ENCODE measurements at regions of chr19 and their contacts with region 1.

Region 1: GRCh38 chr19:45817010-45817724 is 2.1 kb upstream of the RSPH6A start:
- DNase-seq: peak; percentile 95 to 100
- H3K4me3 ChIP-seq: peak overlapping the region; percentile 42 to 68 (median 52); a peak in 6 of 8 replicates
- H3K27ac ChIP-seq: peak overlapping the region; percentile 86
- H3K4me1 ChIP-seq: peaks cover 0 to 23% (median 20%) of the 10 kb centered on the region in 4 experiments; a peak in 6 of 7 replicates
- H3K27me3 ChIP-seq: no peaks in the 10 kb centered on the region
- CTCF ChIP-seq: peak; percentile 97 to 99 (median 99)
- EP300 ChIP-seq: peak in 1 of 2 experiments; percentile 40; a peak in 1 of 3 replicates
- POLR2A ChIP-seq: peak; percentile 68 to 71; a peak in 2 of 3 replicates
- RAD21 ChIP-seq: peak; percentile 60 to 67

Region 2: DNA sequence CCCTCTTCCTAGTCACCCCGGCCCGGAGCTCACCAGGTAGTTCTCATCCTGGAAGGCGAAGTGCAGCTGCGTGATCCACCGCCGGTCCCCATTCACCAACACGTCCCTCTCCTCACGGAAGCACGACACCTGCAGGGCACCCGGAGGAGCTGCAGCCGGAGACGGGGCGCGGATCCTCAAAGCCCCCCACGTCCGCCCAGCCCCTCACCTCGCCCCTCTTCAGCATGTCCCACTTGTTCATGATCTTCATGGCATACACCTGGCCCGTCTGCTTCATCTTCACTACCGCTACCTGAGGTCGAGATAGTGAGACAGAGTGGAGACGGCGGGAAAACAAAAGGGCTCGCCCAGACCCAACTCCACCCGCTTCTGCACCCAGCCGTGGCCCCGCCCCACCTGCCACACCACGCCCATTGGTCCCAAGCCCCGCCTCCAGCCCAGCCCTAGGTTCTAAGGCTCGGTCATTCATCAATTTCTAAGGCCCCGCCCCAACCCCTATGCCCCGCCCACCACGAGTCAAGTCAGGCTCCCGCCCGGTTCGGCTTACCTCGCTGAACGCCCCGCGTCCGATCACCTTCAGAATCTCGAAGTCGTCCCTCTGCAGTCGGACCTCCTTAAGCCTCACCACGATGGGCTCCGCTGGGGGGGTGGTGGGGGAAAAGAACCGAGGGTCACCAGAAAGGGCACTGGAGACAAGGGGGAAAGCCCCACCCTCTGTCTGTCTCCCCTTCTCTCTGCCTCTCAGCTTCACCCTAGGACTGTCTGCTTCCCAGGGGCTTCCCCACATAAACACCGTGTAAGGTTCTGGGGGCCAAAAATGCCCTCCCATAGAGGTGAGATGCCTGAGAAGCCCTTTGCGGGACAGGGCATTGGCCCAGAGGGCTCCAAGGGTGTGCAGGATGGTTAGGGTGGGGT is 37.7 kb before region 1 on chr19:
- CTCF ChIA-PET with region 1: interaction called, 15 read pairs
- POLR2A ChIA-PET with region 1: interaction called, 175 read pairs
- DNase-seq: peak; percentile 77 to 100
- H3K4me3 ChIP-seq: peak overlapping the region; percentile 19 to 60 (median 38); a peak in 7 of 8 replicates
- H3K27ac ChIP-seq: no peak overlapping the region
- H3K4me1 ChIP-seq: peaks cover 3 to 26% (median 15%) of the 10 kb centered on the region in 4 experiments
- H3K27me3 ChIP-seq: peaks cover 0 to 6% (median 0%) of the 10 kb centered on the region in 4 experiments; a peak in 1 of 7 replicates
- CTCF ChIP-seq: peak; percentile 81 to 87 (median 86)
- EP300 ChIP-seq: no peak
- POLR2A ChIP-seq: no peak
- RAD21 ChIP-seq: peak; percentile 45 to 52; a peak in 3 of 4 replicates

Region 3: DNA sequence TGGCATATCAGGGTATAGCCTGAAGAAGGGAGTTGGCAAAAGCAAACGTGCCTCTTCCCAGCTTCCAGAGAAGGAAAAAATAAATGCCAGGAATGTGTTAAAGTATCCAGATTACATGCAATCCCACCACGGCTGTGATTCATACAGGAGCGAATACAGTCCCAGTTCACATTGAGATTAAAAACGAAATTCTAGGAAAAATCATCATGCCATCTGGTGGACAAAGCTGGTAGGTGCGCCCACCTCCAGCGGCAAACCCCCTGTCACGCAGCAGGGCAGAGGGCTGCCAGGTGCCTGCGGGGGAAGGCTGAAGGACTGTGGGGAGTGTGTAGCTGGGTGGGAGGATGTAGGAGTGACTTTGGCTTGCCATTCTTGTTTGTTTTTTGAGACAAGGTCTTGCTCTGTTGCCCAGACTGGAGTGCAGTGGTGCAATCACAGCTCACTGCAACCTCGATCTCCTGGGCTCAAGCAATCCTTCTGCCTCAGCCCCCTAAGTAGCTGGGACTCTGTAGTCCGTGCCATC is 18.1 kb before region 1 on chr19:
- CTCF ChIA-PET with region 1: interaction called, 107 read pairs
- POLR2A ChIA-PET with region 1: interaction called, 106 read pairs
- DNase-seq: peak in 1 of 2 experiments; percentile 83
- H3K4me3 ChIP-seq: no peak overlapping the region
- H3K27ac ChIP-seq: no peak overlapping the region
- H3K4me1 ChIP-seq: peaks cover 0 to 4% (median 2%) of the 10 kb centered on the region in 4 experiments; a peak in 4 of 7 replicates
- H3K27me3 ChIP-seq: no peaks in the 10 kb centered on the region
- CTCF ChIP-seq: peak; percentile 66 to 84 (median 77)
- EP300 ChIP-seq: no peak
- POLR2A ChIP-seq: no peak
- RAD21 ChIP-seq: peak; percentile 45 to 52

Region 4: DNA sequence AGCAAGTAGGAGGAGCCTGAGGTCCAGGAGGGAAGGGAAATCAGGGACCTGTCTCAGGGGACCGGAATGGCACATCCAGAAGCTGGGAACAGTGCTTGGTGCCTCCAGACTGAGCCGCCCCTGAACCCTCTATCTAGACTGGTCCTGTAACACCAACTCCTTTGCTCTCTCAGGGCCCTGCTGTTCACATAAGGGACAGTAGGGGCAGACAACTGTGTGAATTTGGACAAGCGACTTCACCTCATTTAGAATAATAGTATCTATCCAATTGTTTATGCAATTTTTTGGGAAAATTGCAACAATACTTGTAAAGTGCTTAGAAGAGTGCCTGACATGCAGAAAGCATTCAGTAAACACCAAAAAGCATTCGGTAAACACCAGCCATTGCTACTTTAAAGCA is 31.8 kb after region 1 on chr19:
- CTCF ChIA-PET with region 1: interaction called, 13 read pairs
- POLR2A ChIA-PET with region 1: interaction called, 12 read pairs
- DNase-seq: no peak
- H3K4me3 ChIP-seq: no peak overlapping the region
- H3K27ac ChIP-seq: no peak overlapping the region
- H3K4me1 ChIP-seq: no peaks in the 10 kb centered on the region
- H3K27me3 ChIP-seq: no peaks in the 10 kb centered on the region; a peak in 1 of 7 replicates
- CTCF ChIP-seq: peak in 2 of 3 experiments; percentile 12 to 28; a peak in 2 of 4 replicates
- EP300 ChIP-seq: no peak
- POLR2A ChIP-seq: no peak
- RAD21 ChIP-seq: 0 out of 4 replicates have a peak, but pooled peaks of 1 of the 2 experiments have one; percentile 3

Region 5: DNA sequence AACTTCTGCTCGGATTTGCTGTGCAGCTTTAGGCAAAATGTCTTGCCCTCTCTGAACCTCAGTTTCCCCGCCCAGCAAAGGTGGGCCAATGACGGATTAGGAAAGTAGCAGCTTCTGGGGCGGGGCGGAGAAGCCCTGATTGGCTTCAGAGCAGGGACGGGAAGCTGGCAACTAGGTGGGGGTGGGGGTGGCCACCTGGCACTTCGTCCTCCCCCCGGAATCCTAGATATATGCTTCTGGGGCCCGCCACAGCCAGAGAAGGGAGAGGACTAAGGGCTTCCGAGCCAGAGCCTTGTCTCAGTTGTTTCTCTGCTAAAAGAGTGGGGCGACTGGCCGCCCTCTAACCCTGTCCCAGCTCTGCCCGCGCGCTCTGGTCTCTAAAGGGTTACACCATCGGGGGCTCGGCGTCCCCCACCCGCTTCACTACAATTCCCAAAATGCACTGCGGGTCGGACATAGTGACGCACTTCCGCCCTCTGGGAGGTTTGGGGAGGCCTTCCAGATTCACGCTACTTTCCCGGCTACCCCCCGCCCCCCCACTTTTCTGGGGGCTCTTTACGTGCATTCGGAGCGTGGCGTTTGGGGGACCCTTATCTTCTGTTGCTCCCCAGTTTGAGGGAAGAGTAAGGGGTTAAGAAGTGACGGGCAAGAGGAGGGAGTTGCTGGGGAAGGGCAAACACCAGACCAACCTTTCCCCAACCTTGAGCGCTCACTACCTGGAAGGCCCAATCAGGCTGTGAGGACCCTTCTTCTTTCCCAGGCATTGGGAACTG is 69.4 kb after region 1 on chr19:
- CTCF ChIA-PET with region 1: interaction called, 23 read pairs
- POLR2A ChIA-PET with region 1: interaction called, 9 read pairs
- DNase-seq: peak in 1 of 2 experiments; percentile 93
- H3K4me3 ChIP-seq: peak overlapping the region; percentile 71 to 80 (median 78)
- H3K27ac ChIP-seq: peak overlapping the region; percentile 86
- H3K4me1 ChIP-seq: peaks cover 5 to 22% (median 14%) of the 10 kb centered on the region in 4 experiments
- H3K27me3 ChIP-seq: no peaks in the 10 kb centered on the region
- CTCF ChIP-seq: no peak
- EP300 ChIP-seq: no peak; a peak in 1 of 3 replicates
- POLR2A ChIP-seq: peak; percentile 68 to 70; a peak in 2 of 3 replicates
- RAD21 ChIP-seq: no peak

Region 6: DNA sequence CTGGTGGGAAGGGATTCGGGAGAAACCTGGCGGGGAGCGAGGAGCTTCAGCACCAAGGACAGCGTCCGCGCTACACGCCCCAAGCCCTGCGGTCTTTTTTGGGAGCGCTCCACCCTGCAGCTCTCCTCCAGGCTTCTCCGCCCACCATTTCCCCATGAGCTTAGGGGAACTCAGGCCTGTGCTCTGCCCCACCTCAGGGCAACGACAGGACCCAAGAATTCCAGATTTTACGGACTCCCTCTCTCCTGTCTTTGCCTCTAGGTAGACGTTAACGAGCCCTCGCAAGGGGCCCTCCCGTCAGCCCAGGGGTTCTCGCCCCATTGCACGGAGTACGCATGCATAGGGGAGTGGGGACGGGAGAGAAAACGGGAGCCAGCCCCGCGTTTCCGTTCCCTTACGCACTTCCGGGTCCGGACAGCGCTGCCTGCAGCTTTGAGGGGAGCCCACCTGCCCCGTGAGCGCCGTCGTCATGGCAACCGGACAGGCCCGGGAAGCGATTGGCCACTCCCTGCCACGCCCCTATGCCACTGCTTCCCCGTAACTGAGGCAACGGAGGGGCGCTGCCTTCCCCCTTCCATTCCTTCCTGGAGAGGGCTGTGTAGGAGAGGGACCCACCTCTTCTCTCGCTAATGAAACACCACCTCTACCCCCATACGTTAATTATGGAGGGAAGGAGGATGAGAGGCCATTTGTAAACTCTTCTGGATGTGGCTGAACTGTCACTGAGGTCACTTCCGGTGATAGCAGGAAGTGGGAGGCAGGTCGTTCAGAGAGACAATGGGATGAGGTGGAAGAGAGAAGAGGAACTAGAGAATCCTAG is 135.7 kb after region 1 on chr19:
- CTCF ChIA-PET with region 1: no interaction called
- POLR2A ChIA-PET with region 1: no interaction called
- DNase-seq: peak; percentile 81 to 96
- H3K4me3 ChIP-seq: peak overlapping the region; percentile 55 to 75 (median 71)
- H3K27ac ChIP-seq: peak overlapping the region; percentile 53
- H3K4me1 ChIP-seq: peaks cover 0 to 3% (median 0%) of the 10 kb centered on the region in 4 experiments; a peak in 3 of 7 replicates
- H3K27me3 ChIP-seq: no peaks in the 10 kb centered on the region
- CTCF ChIP-seq: no peak
- EP300 ChIP-seq: peak in 1 of 2 experiments; percentile 2; a peak in 1 of 3 replicates
- POLR2A ChIP-seq: peak in 1 of 2 experiments; percentile 56; a peak in 2 of 3 replicates
- RAD21 ChIP-seq: peak in 1 of 2 experiments; percentile 14; a peak in 1 of 4 replicates

Region 7: GRCh38 chr19:46081928-46082727 is 265.0 kb after region 1 on chr19:
- CTCF ChIA-PET with region 1: no interaction called
- POLR2A ChIA-PET with region 1: no interaction called
- DNase-seq: no peak
- H3K4me3 ChIP-seq: no peak overlapping the region
- H3K27ac ChIP-seq: no peak overlapping the region
- H3K4me1 ChIP-seq: peaks cover 0 to 3% (median under 1%) of the 10 kb centered on the region in 4 experiments; a peak in 2 of 7 replicates
- H3K27me3 ChIP-seq: peaks cover 2 to 9% (median 7%) of the 10 kb centered on the region in 4 experiments
- CTCF ChIP-seq: peak in 2 of 3 experiments; percentile 79 to 80; a peak in 3 of 4 replicates
- EP300 ChIP-seq: no peak
- POLR2A ChIP-seq: no peak
- RAD21 ChIP-seq: peak; percentile 83 to 84